Calu3 (cell line): ENCODE measurements at regions of chr20 and their contacts with region 1.

Region 1: DNA sequence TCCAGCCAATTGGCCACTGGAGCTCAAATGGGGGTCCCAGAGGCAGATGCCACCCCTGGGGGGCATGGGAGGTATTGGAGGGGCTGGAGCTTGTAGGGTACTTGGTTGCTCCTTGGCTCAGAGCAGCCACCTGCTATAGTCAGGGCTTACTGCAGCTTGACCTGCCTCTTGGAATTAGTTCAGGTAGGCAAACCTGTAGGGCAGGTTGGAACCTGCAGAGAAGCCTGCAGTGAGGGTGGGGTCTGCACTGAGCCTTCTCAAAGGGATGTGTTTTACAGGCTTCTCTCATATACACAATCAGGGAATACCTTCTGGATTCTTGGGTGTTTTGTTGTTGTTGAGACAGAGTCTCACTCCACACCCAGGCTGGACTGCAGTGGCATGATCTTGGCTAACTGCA is 94.2 kb upstream of the MYL9 start:
- DNase-seq: peak; percentile 63
- H3K4me3 Mint-ChIP-seq: no peak overlapping the region
- H3K27ac Mint-ChIP-seq: no peak overlapping the region
- H3K4me1 Mint-ChIP-seq: peaks cover 7% of the 10 kb centered on the region
- H3K27me3 Mint-ChIP-seq: peaks cover 31% of the 10 kb centered on the region
- CTCF ChIP-seq: no peak

Region 2: DNA sequence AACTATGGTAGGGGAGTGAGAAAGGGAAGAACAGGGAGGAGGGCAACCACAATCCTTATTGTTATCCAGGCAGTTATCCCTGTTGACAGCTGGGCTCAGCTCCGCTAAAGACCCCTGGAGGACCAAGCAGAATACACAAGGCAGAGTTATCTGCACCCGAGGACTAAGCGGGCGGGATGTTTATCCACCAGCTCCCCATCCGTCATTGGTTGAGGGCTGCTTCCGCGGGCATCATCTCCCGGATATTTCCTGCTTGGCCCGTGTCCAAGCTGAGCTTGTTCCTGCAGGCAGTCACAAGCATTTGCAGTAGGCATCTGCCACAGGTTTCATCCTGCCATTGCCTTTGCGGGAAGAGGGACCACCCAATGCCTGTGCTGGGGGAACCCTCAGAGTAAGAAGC is 38.9 kb before region 1 on chr20:
- CTCF ChIA-PET with region 1: interaction called, 10 read pairs
- intact Hi-C with region 1: no loop called
- DNase-seq: peak; percentile 61
- H3K4me3 Mint-ChIP-seq: no peak overlapping the region
- H3K27ac Mint-ChIP-seq: no peak overlapping the region
- H3K4me1 Mint-ChIP-seq: no peaks in the 10 kb centered on the region
- H3K27me3 Mint-ChIP-seq: peaks cover 68% of the 10 kb centered on the region
- CTCF ChIP-seq: no peak

Region 3: DNA sequence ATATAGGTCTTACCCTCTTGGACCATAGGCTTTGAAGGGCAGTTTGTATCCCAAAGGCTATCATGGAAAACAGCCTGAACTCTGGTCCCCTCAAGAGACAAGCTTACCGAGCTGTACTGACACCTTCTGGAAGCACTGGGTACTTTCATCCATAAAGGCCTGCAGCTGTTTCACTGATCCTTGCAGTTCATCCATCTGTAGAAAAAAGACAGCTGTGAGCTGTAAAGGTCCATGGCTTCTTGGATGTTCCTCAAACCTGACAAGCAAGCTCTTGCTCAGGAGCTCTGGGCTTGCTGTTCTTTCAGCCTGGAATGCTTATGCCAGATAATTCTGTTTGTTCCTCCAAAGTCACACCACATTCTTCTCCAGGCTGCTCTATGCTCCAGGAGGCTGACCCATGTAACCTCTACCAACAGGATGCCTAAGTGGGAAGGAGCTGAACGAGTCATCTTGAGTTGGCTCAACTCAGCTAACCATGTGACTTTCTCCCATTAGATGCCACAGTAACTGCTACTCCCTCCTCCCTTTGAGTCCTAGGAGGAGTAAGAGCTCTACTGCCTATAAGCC is 307.6 kb after region 1 on chr20:
- CTCF ChIA-PET with region 1: no interaction called
- intact Hi-C with region 1: no loop called
- DNase-seq: peak; percentile 65
- H3K4me3 Mint-ChIP-seq: no peak overlapping the region
- H3K27ac Mint-ChIP-seq: no peak overlapping the region
- H3K4me1 Mint-ChIP-seq: no peaks in the 10 kb centered on the region
- H3K27me3 Mint-ChIP-seq: no peaks in the 10 kb centered on the region
- CTCF ChIP-seq: peak; percentile 74